ENCODE measurements at regions of chr6 and their contacts with region 1.

Region 1: DNA sequence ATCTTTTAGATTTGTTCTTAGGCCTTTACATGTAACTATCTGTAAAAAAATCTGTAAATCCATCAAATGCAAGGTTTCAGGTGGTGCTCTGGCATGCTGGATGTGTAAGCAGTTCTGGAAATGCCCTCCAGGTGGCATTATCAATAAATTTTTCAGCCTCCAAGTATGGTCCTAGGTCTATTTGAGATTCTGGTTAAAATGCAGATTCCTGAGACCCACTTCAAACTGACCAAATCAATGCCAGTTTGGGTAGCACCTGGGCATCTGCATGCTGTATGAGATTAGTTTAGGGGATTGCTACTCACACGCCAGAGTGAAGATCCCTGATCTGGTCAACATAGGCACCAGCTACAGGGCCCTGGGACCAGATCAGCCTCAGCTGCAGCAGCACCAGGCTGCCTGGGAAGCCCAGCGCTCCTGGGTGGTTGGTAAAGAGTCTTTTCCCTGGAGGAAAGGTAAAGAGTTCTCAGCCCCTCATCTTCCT is 507.3 kb upstream of the CITED2 start:
- DNase-seq: no peak
- ATAC-seq: peak; percentile 92
- H3K4me3 ChIP-seq: no peak overlapping the region
- H3K27ac ChIP-seq: no peak overlapping the region
- H3K4me1 ChIP-seq: peaks cover 12% of the 10 kb centered on the region
- H3K27me3 ChIP-seq: no peaks in the 10 kb centered on the region
- CTCF ChIP-seq: peak; percentile 46 to 56 (median 55)
- EP300 ChIP-seq: no peak
- POLR2A ChIP-seq: no peak
- RAD21 ChIP-seq: peak; percentile 52

Region 2: DNA sequence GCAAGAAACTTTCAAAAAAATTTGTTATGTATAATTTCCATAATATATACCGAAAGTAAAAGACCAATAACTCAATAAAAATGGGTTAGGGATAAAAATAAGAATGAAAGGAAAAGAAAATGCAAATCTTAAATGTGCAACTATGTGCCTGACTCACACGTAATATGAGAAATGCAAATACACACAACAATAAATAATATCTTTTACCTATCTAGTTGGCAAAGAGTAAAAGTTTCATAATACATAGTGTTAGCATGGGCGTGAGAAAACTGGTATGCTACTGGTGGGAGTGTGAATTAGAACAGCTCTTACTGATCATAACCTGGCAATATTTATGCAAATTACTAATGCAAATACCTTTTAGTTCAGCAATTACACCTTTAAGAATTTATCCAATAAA is 68.8 kb before region 1 on chr6:
- CTCF ChIA-PET with region 1: no interaction called
- POLR2A ChIA-PET with region 1: no interaction called
- RAD21 ChIA-PET with region 1: no interaction called
- SMC1A ChIA-PET with region 1: no interaction called
- in situ Hi-C with region 1: no loop called
- intact Hi-C with region 1: no loop called
- DNase-seq: no peak
- ATAC-seq: no peak
- H3K4me3 ChIP-seq: no peak overlapping the region
- H3K27ac ChIP-seq: no peak overlapping the region
- H3K4me1 ChIP-seq: no peaks in the 10 kb centered on the region
- H3K27me3 ChIP-seq: no peaks in the 10 kb centered on the region
- CTCF ChIP-seq: no peak
- EP300 ChIP-seq: no peak
- POLR2A ChIP-seq: no peak
- RAD21 ChIP-seq: no peak

Region 3: DNA sequence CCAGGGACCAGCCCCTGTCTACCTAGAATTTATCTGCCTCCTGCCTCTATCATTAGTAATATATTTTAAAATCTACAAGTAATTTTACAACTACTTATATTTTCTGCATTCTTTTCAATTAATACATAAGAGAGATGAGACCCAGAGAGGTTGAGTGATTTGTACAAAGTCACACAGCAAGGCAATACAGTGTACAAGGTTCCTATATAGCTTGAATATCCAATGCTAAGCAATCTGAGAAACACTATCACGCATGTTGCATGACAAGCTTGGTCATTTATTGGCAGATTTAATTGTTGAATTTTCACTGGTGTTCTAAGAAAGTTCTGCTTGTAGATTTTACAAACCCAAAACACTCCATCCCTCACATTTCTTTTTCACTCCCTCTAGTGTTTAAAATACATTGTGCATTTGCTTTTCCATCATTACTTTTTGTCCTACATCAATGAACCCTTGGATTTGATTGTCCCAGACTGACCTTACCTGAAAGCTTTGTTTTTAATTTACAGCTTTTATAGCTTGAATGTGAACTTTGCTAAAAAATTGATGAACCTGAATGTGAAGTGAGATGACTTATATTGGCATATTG is 13.5 kb after region 1 on chr6:
- CTCF ChIA-PET with region 1: interaction called, 15 read pairs
- POLR2A ChIA-PET with region 1: no interaction called
- RAD21 ChIA-PET with region 1: interaction called, 7 read pairs
- SMC1A ChIA-PET with region 1: interaction called, 5 read pairs
- in situ Hi-C with region 1: no loop called
- intact Hi-C with region 1: no loop called
- DNase-seq: no peak
- ATAC-seq: no peak
- H3K4me3 ChIP-seq: no peak overlapping the region
- H3K27ac ChIP-seq: no peak overlapping the region
- H3K4me1 ChIP-seq: no peaks in the 10 kb centered on the region
- H3K27me3 ChIP-seq: no peaks in the 10 kb centered on the region
- CTCF ChIP-seq: no peak
- EP300 ChIP-seq: no peak
- POLR2A ChIP-seq: no peak
- RAD21 ChIP-seq: no peak

Region 4: DNA sequence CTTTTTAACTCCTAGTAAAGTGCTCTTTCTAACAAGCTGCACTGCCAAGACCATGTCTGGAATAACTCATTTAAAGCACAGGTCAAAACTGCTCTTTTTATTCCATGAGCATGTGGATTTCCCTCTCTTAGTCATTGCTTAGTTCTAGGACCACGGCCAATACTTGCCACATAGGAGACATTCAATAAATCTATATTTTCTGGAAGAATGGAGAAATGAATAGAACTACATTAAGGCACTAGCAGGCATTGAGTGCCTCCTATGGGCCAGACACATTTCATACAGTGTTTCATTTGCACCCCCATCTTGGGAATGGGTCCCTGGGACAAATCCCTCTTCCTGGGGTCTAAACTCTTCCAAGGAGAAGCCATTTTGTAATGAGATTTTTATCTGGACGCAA is 45.5 kb after region 1 on chr6:
- CTCF ChIA-PET with region 1: interaction called, 35 read pairs
- POLR2A ChIA-PET with region 1: no interaction called
- RAD21 ChIA-PET with region 1: interaction called, 6 read pairs
- SMC1A ChIA-PET with region 1: interaction called, 25 read pairs
- in situ Hi-C with region 1: no loop called
- intact Hi-C with region 1: no loop called
- DNase-seq: no peak
- ATAC-seq: 0 out of 3 replicates have a peak, but pooled peaks have one; percentile 27
- H3K4me3 ChIP-seq: no peak overlapping the region
- H3K27ac ChIP-seq: no peak overlapping the region
- H3K4me1 ChIP-seq: no peaks in the 10 kb centered on the region
- H3K27me3 ChIP-seq: no peaks in the 10 kb centered on the region
- CTCF ChIP-seq: peak; percentile 28 to 48 (median 31); a peak in 4 of 6 replicates
- EP300 ChIP-seq: no peak
- POLR2A ChIP-seq: no peak
- RAD21 ChIP-seq: peak; percentile 62

Region 5: DNA sequence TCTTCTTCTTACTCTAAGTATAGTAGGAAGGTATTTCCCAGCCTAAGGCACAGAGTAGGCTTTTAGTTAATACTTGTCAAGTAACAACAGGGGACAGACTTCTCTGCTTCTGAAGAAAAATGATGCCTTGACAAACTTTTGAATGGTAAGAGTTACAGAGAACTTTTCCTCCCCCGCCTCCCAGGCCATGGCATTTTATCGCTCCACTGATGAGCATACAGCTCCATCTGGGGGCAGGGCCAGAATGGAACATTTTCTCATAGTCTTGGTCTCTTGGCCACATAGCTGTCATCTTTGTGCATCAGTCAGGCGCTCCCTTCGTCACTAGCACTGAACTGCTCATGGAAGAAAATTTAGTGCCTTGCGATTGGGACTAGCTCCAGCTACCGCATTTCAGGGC is 559.5 kb after region 1 on chr6:
- CTCF ChIA-PET with region 1: interaction called, 3 read pairs
- POLR2A ChIA-PET with region 1: no interaction called
- RAD21 ChIA-PET with region 1: no interaction called
- SMC1A ChIA-PET with region 1: interaction called, 6 read pairs
- in situ Hi-C with region 1: no loop called
- intact Hi-C with region 1: loop called (anchors 1 kb)
- DNase-seq: no peak
- ATAC-seq: peak; percentile 52; the same call in 2 of the 3 replicates
- H3K4me3 ChIP-seq: no peak overlapping the region
- H3K27ac ChIP-seq: no peak overlapping the region
- H3K4me1 ChIP-seq: no peaks in the 10 kb centered on the region
- H3K27me3 ChIP-seq: no peaks in the 10 kb centered on the region
- CTCF ChIP-seq: peak in 2 of 3 experiments; percentile 15 to 36; a peak in 2 of 6 replicates
- EP300 ChIP-seq: no peak
- POLR2A ChIP-seq: no peak
- RAD21 ChIP-seq: peak; percentile 76

Region 6: DNA sequence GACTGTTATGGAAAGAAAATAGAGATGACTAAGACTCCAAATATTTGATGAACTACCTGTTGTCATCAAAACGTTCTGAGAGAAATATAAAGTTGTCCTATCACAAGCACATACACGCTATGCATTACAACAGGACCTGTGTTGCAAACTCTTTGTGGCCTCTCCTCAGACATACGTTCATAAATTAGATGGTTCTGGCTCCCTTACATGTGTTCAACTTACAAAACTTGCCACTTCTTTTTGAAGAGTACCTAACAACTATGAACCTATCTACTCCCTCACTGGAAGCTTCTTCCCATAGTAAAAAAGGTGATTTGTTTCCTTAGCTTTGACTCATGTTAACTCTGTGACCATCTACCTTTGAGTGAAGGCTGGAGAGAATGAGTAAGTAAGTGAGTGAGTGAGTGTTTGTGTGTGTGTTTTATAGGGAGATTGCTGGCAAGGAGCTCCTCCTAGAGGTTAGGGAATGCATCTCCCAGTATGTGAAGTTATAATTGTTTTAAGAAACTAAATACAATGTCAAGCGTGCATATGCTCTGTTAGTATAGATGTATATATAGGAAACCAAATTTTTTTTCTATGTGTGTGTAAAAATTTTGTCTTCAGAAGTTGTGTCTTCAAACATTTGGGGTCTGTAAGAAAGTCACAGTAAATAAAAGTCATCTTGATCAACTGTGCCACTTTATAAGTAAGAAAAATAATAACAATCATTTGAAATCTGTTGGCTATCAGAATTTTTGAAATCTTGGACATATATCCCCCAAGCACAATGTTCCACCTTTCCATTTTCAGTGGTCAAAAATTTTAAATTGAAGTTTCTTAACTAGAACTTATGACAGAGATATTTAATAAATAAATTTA is 1039.8 kb after region 1 on chr6:
- CTCF ChIA-PET with region 1: interaction called, 3 read pairs
- POLR2A ChIA-PET with region 1: no interaction called
- RAD21 ChIA-PET with region 1: interaction called, 3 read pairs
- SMC1A ChIA-PET with region 1: interaction called, 3 read pairs
- in situ Hi-C with region 1: no loop called
- intact Hi-C with region 1: loop called (anchors 1 kb)
- DNase-seq: no peak
- ATAC-seq: peak; percentile 87
- H3K4me3 ChIP-seq: no peak overlapping the region
- H3K27ac ChIP-seq: no peak overlapping the region
- H3K4me1 ChIP-seq: no peaks in the 10 kb centered on the region
- H3K27me3 ChIP-seq: no peaks in the 10 kb centered on the region
- CTCF ChIP-seq: peak; percentile 57 to 77 (median 60); a peak in 5 of 6 replicates
- EP300 ChIP-seq: no peak
- POLR2A ChIP-seq: no peak
- RAD21 ChIP-seq: peak; percentile 92